GM13977 (cell line): ENCODE measurements at regions of chr11 and their contacts with region 1.

Region 1: GRCh38 chr11:70467201-70468085 is 69.1 kb downstream of the CTTN start:
- DNase-seq: peak; percentile 72
- CTCF ChIP-seq: peak; percentile 80

Region 2: GRCh38 chr11:69918938-69919650 is 548.3 kb before region 1 on chr11:
- in situ Hi-C with region 1: loop called (anchors 25 kb)
- DNase-seq: peak; percentile 83
- CTCF ChIP-seq: peak; percentile 85

Region 3: DNA sequence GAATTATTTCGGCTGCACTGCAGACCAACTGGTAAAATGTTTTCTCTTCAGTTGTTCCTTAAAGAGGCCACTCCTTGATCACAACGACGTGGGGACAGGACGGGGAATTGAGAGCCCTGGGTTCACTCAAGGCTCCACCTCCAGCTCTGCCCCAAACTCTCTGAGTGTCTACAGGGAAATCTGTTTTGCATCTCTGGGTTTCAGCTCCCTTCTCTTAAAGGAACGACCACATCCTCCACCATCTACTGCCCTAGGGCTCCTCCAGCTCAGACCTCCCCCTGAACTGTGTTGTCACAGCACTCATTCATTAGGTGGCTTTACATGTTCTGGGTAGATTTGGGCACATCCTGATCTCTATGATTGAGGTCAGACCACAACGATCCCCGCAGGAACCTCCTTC is 202.1 kb before region 1 on chr11:
- in situ Hi-C with region 1: no loop called
- DNase-seq: no peak
- CTCF ChIP-seq: no peak

Region 4: DNA sequence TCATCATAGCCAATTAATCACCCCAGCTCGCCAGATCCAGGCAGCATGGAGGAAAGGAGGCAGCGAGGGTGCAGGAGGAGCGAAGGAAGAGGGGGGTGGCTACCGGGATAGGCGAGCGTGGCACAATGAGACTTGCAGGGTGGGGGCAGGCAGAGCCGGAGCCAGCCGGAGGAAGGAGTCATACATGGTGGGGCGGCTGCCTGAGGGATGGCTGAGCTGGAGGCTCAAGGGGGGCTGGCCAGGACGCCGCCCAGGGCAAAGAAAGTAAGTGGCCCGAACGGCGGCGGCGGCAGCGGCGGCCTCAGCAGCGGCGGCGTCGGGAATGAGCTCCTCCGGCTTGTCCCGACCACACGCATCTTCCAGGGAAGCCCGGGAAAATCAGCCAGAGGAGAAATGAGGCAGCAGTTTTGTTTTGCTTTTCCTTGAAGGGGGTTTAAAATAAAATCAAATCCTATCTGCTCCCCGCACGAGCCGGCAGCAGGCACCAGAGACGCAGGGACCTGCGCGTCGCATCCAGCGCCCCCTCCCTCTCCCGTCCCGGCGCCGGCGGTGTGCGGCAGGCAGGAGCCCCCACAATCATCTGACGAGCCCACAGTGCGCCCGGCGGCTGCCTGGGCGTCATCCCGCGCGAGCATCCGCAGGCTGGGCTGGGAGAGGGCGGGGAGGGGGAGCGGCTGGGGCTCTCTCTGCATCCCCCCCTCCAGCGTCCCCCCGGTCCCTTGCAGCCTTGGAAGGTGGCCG is 194.5 kb after region 1 on chr11:
- in situ Hi-C with region 1: no loop called
- DNase-seq: no peak
- CTCF ChIP-seq: no peak

Region 5: GRCh38 chr11:70755410-70756161 is 288.1 kb after region 1 on chr11:
- in situ Hi-C with region 1: loop called (anchors 25 kb)
- DNase-seq: peak; percentile 91
- CTCF ChIP-seq: peak; percentile 99